ENCODE measurements at regions of chr4 and their contacts with region 1.

Region 1: GRCh38 chr4:107913281-107913899 is 18.0 kb upstream of the CYP2U1 start:
- ATAC-seq: peak in 7 of 8 experiments; percentile 36 to 76 (median 63)
- H3K4me3 ChIP-seq: no peak overlapping the region
- H3K27ac ChIP-seq: no peak overlapping the region
- H3K4me1 ChIP-seq: no peaks in the 10 kb centered on the region

Region 2: DNA sequence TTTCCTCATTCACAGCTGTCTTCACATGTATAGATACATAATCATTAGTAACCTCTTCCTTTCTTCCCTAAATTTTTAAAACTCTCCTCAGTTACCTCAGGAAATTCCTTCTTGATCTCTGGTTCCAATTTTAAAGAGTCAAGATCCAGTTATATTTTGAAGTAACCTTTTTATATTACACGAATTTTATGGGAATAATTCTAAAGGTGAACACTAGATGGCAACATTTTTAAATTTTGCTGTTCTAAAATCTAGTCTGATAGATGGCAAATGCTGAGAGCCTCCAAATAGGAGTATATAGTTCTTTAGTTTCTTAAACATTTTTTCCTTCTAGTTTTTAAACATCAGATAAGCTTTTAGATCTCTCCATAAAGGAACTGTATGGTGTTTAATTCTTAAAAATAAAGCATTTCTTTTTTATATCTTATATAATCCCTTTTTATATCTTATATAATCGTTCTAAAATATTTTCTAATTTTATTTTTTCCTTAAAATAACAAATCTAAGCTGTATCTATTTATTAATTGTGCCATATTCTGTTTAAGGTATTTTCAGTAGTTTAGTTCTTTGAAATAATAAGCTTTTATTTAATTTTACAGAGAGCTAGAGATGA is 155.4 kb before region 1 on chr4:
- in situ Hi-C with region 1: loop called in 5 of 9 experiments (anchors 10 to 25 kb)
- ATAC-seq: no peak
- H3K4me3 ChIP-seq: no peak overlapping the region
- H3K27ac ChIP-seq: no peak overlapping the region
- H3K4me1 ChIP-seq: no peaks in the 10 kb centered on the region

Measured in motor neuron (in vitro differentiated cells).